ENCODE measurements at regions of chr6 and their contacts with region 1.

Region 1: DNA sequence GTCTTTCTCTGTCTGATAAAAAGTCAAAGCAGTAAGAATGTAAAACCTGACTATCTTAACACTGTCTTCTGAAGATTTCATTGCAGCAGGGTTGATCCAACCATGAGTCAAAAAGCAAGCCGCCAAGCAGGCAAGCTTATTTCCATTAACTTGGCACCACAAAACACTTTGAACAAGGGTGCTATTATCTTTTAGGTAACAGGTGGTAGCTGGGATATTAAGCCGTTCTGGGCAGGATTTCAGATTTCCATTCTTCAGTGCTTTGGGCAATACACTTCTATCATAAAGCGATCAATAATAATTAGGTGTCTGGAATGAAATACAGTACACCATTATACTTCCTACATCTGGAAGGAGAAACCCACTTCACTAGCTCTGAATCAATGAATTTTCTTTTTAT is 181.9 kb downstream of the TBC1D7 start:
- DNase-seq: no peak
- H3K4me3 Mint-ChIP-seq: no peak overlapping the region
- H3K27ac Mint-ChIP-seq: no peak overlapping the region
- H3K4me1 Mint-ChIP-seq: no peaks in the 10 kb centered on the region
- H3K27me3 Mint-ChIP-seq: peaks cover 11% of the 10 kb centered on the region

Region 2: DNA sequence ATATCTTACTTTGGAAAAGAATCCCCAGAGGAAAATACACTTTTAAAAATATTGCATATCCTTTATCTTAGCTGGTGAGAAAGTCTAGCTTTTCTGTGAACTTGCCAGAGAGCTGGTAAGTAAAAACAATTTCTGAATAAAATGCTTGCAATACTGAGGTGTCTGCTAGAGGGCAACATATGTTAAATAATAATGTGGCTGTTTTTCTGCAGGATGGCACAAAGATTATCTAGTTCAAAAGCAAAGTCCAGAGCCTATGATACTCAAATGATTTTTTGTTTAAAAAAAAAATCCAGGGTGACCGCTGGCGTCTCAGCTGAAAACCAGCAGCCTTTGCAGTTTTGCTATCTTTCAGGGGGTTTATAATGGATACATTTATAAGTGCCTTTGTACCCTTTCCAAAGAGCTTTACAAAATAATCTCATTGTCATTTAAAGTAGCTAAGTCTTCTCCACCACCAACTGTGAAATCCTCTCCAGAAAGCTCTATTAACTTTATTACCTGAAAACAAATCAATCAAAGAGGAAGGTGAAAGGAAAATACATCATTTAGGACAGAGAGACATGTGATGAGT is 235.0 kb before region 1 on chr6:
- intact Hi-C with region 1: loop called (anchors 10 kb)
- DNase-seq: no peak
- H3K4me3 Mint-ChIP-seq: no peak overlapping the region
- H3K27ac Mint-ChIP-seq: no peak overlapping the region
- H3K4me1 Mint-ChIP-seq: no peaks in the 10 kb centered on the region
- H3K27me3 Mint-ChIP-seq: peaks cover 4% of the 10 kb centered on the region

Region 3: DNA sequence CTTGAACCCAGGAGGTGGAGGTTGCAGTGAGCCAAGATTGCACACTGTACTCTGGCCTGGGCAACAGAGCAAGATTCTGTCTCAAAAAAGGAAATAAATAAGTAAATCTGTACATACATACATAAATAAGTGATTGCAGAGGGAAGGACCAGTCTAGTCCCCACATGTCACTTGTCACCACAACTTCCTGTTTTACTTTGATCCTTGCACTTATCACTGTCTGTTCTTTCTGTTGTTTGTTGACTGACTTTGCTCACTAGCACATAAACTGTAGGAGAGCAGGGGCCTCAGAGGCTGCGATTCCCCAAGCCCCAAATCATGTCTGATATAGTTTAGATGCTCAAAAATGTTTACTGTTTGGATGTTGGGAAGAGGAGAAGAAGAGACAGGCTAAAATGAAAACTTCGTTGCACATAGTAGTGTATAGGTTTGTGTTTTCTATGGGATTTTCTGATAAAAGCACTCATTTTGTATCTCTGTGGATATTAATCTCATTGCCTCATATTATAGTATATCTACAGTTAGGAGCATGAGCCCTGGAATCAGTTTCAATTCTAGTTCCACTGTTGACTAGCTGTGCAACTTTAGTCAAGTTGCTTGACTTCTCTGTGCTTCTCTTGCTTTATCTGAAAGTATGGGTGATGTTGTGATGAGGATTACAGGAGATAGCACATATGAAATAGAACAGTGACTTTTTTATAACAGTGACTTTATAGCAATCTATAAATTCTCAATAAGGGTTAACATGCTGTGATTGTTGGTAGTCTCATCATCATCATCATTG is 16.9 kb after region 1 on chr6:
- intact Hi-C with region 1: loop called (anchors 1 kb)
- DNase-seq: no peak
- H3K4me3 Mint-ChIP-seq: no peak overlapping the region
- H3K27ac Mint-ChIP-seq: no peak overlapping the region
- H3K4me1 Mint-ChIP-seq: peaks cover 5% of the 10 kb centered on the region
- H3K27me3 Mint-ChIP-seq: peaks cover 5% of the 10 kb centered on the region

Measured in activated T-helper 1 cell treated with anti-CD3 and anti-CD28 coated beads, Interleukin-12 subunit alpha, Interleukin-12 subunit beta, Interleukin-2, Interleukin-4 antibody, amounts not matched to agents 30 ng/mL and 10 ng/mL and 1 ng/mL, durations not matched to agents 14 hours and 24 hours and 36 hours (primary cell).